Activated B cell treated with CpG ODN at 0.5 μM for 24 hours (primary cell): ENCODE measurements at regions of chr3 and their contacts with region 1.

Region 1: GRCh38 chr3:191356611-191357439 is 26.5 kb upstream of the UTS2B start:
- DNase-seq: no peak
- ATAC-seq: no peak
- H3K4me3 Mint-ChIP-seq: no peak overlapping the region
- H3K27ac Mint-ChIP-seq: peak overlapping the region; percentile 84
- H3K4me1 Mint-ChIP-seq: peaks cover 57% of the 10 kb centered on the region
- H3K27me3 Mint-ChIP-seq: no peaks in the 10 kb centered on the region
- CTCF ChIP-seq: no peak

Region 2: DNA sequence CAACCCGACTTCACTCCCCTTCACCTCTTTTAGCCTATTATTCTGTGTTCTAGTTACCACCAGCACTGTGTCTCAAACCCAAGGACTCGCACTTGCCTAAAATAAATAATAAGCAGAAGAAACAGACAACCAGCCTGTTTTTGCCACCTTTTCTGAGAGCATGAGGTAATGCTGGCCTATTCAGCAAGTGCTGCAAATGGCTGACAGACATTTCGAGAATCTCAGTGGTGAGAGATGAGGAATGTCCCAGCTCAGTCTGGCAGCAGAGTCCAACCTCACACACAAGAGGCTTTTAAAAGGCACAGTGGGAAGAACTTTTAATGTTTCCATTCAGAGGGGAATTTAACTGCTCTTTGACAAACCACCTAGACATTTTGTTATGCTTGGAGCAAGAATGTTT is 351.0 kb before region 1 on chr3:
- CTCF ChIA-PET with region 1: no interaction called
- POLR2A ChIA-PET with region 1: no interaction called
- intact Hi-C with region 1: no loop called
- DNase-seq: no peak
- ATAC-seq: no peak
- H3K4me3 Mint-ChIP-seq: no peak overlapping the region
- H3K27ac Mint-ChIP-seq: no peak overlapping the region
- H3K4me1 Mint-ChIP-seq: no peaks in the 10 kb centered on the region
- H3K27me3 Mint-ChIP-seq: peaks cover 8% of the 10 kb centered on the region
- CTCF ChIP-seq: no peak

Region 3: GRCh38 chr3:191136347-191136746 is 220.5 kb before region 1 on chr3:
- CTCF ChIA-PET with region 1: no interaction called
- POLR2A ChIA-PET with region 1: no interaction called
- intact Hi-C with region 1: no loop called
- DNase-seq: no peak
- ATAC-seq: no peak
- H3K4me3 Mint-ChIP-seq: no peak overlapping the region
- H3K27ac Mint-ChIP-seq: no peak overlapping the region
- H3K4me1 Mint-ChIP-seq: peaks cover 38% of the 10 kb centered on the region
- H3K27me3 Mint-ChIP-seq: no peaks in the 10 kb centered on the region
- CTCF ChIP-seq: no peak

Region 4: DNA sequence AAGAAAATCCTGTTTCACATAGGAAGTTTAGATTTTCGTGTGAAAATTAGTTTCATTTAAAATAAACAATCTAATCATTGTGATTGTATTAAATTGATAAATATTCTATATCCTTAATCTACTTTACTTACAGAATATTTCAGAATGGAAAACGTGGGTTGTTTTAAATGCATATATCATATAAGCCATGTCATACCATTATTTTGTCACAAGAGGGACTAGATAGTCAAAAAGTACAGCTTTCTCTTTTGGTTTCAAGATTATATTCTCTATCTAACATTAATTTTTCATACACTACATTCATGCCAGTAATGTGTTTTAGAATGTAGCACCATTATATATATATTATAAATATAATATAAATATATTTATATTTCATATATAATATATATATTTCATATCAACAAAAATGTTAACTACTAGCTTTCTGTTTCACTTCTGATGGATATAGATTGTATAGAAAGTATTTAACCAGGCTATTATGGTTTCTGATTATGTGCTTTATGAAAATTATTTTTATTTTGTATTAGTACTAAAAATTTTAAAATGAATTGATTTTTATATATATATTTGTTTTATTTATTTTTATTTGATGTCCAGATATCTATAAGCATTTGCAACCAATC is 112.5 kb before region 1 on chr3:
- CTCF ChIA-PET with region 1: interaction called, 10 read pairs
- POLR2A ChIA-PET with region 1: no interaction called
- intact Hi-C with region 1: loop called (anchors 1 kb)
- DNase-seq: no peak
- ATAC-seq: peak; percentile 26
- H3K4me3 Mint-ChIP-seq: no peak overlapping the region
- H3K27ac Mint-ChIP-seq: no peak overlapping the region
- H3K4me1 Mint-ChIP-seq: peaks cover 40% of the 10 kb centered on the region
- H3K27me3 Mint-ChIP-seq: no peaks in the 10 kb centered on the region
- CTCF ChIP-seq: peak; percentile 76

Region 5: GRCh38 chr3:191296041-191296541 is 60.7 kb before region 1 on chr3:
- CTCF ChIA-PET with region 1: no interaction called
- POLR2A ChIA-PET with region 1: interaction called, 4 read pairs
- intact Hi-C with region 1: loop called (anchors 2 kb)
- DNase-seq: no peak
- ATAC-seq: peak; percentile 77
- H3K4me3 Mint-ChIP-seq: no peak overlapping the region
- H3K27ac Mint-ChIP-seq: no peak overlapping the region
- H3K4me1 Mint-ChIP-seq: peaks cover 34% of the 10 kb centered on the region
- H3K27me3 Mint-ChIP-seq: no peaks in the 10 kb centered on the region
- CTCF ChIP-seq: no peak

Region 6: DNA sequence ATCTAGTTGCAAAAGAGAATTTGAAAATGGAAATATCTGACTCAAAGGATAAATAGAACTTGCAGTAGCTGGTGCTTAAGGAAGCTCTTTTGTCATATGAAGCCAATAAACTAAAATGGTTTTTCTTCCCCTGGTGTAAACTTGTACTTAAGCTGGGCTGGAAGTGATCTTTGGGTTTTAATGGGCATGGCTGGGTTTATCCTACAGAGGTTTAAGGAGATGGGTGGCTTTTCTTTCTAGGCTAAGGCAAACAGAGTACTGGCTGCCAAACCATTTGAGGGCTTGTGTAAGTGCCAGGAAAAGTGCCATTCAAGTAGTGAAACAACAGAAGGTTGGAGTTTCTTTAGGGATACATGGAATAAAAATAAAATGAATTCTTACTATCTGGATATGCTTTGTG is 14.4 kb before region 1 on chr3:
- CTCF ChIA-PET with region 1: interaction called, 3 read pairs
- POLR2A ChIA-PET with region 1: interaction called, 3 read pairs
- intact Hi-C with region 1: loop called (anchors 1 kb)
- DNase-seq: no peak
- ATAC-seq: no peak
- H3K4me3 Mint-ChIP-seq: no peak overlapping the region
- H3K27ac Mint-ChIP-seq: peak overlapping the region; percentile 15
- H3K4me1 Mint-ChIP-seq: peaks cover 93% of the 10 kb centered on the region
- H3K27me3 Mint-ChIP-seq: no peaks in the 10 kb centered on the region
- CTCF ChIP-seq: no peak

Region 7: DNA sequence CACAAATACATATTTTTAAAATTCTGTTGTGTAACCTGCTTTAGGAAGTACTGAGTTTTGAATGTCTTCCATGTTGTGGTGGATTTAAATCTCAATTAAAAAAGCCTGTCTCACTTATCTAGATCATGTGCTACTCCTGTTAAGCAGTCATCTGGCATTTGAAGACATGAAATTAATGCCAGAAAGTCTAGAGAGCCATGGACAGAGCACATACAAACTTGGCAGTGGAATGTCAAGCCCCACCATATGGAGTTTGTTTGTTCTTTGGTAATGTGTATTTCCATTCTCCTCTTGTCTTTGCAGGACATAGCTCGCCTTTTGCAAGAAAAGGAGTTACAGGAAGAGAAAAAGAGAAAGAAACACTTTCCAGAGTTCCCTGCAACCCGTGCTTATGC is 12.8 kb after region 1 on chr3:
- CTCF ChIA-PET with region 1: no interaction called
- POLR2A ChIA-PET with region 1: no interaction called
- intact Hi-C with region 1: loop called (anchors 1 kb)
- DNase-seq: no peak
- ATAC-seq: no peak
- H3K4me3 Mint-ChIP-seq: no peak overlapping the region
- H3K27ac Mint-ChIP-seq: no peak overlapping the region
- H3K4me1 Mint-ChIP-seq: peaks cover 18% of the 10 kb centered on the region
- H3K27me3 Mint-ChIP-seq: no peaks in the 10 kb centered on the region
- CTCF ChIP-seq: no peak

Region 8: GRCh38 chr3:191648787-191649186 is 292.0 kb after region 1 on chr3:
- CTCF ChIA-PET with region 1: no interaction called
- POLR2A ChIA-PET with region 1: no interaction called
- intact Hi-C with region 1: no loop called
- DNase-seq: no peak
- ATAC-seq: no peak
- H3K4me3 Mint-ChIP-seq: no peak overlapping the region
- H3K27ac Mint-ChIP-seq: no peak overlapping the region
- H3K4me1 Mint-ChIP-seq: no peaks in the 10 kb centered on the region
- H3K27me3 Mint-ChIP-seq: no peaks in the 10 kb centered on the region
- CTCF ChIP-seq: no peak